ENCODE measurements at regions of chr11 and their contacts with region 1.

Region 1: GRCh38 chr11:355581-356458 is 13.5 kb upstream of the B4GALNT4 start:
- DNase-seq: peak; percentile 98
- H3K4me3 ChIP-seq: peak overlapping the region; percentile 32 to 66 (median 40)
- H3K27ac ChIP-seq: peak overlapping the region; percentile 88 to 99 (median 97)
- H3K4me1 ChIP-seq: peaks cover 7 to 51% (median 36%) of the 10 kb centered on the region in 6 donors
- H3K27me3 ChIP-seq: no peaks in the 10 kb centered on the region
- CTCF ChIP-seq: peak in 2 of 11 experiments; percentile 4 to 19
- POLR2A ChIP-seq: peak in 2 of 3 donors; percentile 65 to 79

Region 2: GRCh38 chr11:304915-305843 is 50.6 kb before region 1 on chr11:
- intact Hi-C with region 1: loop called (anchors 5 kb)
- DNase-seq: peak; percentile 84
- H3K4me3 ChIP-seq: no peak overlapping the region
- H3K27ac ChIP-seq: peak overlapping the region in 6 of 8 donors; percentile 44 to 97 (median 90)
- H3K4me1 ChIP-seq: peaks cover 16 to 77% (median 51%) of the 10 kb centered on the region in 6 donors
- H3K27me3 ChIP-seq: peaks cover 0 to 3% (median 0%) of the 10 kb centered on the region in 7 donors
- CTCF ChIP-seq: peak; percentile 66 to 90 (median 81)
- POLR2A ChIP-seq: no peak

Region 3: DNA sequence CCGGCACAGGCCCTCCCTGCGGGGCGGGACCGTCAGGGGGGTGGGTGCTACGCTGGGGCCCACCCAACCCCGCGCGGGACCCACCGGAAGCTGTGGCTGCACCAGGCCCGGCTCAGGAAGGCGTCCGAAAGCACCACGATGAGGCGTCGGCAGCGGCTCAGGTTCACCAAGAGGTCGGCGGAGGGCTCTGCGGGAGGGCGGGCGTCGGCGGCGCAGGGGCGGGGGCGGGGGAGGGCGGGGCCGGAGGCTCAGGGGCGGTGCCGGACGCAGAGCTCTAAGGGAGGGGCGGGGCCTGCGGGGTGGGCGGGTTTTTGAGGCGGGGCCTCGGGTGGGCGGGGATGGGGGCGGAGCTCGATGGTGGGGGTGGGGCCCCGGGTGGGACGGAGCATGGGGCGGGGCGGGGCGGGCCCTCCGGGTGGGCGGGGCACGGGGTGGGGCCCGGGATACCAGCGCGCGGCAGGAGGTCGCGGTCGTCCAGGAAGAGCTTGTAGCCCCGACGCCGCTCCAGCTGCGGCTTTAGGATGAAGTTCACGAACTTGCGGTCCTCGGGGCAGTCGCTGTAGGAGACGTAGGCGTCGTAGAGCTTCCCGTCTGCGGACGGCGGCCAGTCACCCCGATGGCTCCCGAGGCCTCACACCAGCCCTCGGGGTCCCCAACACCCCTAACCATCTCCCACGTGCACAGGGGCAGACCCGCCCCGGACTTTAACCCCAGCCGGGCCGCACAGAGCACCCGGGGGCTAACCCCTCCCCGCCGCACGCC is 51.3 kb after region 1 on chr11:
- intact Hi-C with region 1: no loop called
- DNase-seq: peak; percentile 94
- H3K4me3 ChIP-seq: peak overlapping the region; percentile 45 to 82 (median 52)
- H3K27ac ChIP-seq: peak overlapping the region; percentile 53 to 92 (median 84)
- H3K4me1 ChIP-seq: peaks cover 10 to 51% (median 34%) of the 10 kb centered on the region in 6 donors
- H3K27me3 ChIP-seq: peaks cover 0 to 11% (median 6%) of the 10 kb centered on the region in 7 donors
- CTCF ChIP-seq: no peak
- POLR2A ChIP-seq: no peak

Region 4: DNA sequence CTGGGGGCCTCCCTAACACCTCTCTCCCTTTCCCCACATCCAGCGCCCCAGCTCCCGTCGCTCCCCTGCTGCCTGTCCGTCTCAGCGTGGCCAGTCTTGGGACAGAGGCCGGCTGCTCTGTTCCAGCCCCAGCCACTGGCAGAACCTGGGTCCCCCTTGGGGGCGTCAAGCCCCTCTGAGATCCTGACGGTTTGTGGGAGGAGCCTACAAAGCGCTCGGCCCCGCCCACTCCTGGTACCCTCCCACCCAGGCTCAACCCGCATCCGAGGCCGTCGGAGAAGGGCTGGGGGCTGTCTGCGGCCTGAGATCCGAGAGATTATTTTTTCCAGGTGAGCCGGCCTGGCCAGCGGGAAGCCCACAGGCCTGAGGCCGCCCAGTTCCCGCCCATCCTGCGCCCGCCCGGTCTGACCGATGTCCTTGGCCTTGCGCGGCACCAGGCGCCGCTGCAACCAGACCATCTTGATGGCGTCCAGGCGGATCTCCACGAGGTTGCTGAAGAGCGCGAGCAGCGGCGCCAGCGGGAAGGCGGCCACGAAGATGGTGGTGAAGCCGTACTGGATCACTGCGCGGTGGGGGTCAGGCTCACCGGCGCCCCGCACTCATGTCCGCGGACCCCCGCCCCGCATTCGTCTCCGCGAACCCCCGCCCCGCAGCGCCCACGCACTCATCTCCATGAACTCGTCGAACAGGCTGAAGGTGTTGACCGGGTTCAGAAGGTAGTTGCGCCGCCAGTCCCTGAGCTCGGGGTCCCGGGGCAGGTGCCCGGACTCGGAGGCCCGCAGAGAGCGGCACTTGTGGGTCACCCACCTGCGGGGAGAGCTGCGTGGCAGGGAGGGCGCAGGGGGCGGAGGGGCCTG is 64.5 kb after region 1 on chr11:
- intact Hi-C with region 1: no loop called
- DNase-seq: peak; percentile 78
- H3K4me3 ChIP-seq: no peak overlapping the region
- H3K27ac ChIP-seq: no peak overlapping the region
- H3K4me1 ChIP-seq: peaks cover 10 to 30% (median 27%) of the 10 kb centered on the region in 6 donors
- H3K27me3 ChIP-seq: peaks cover 0 to 16% (median 0%) of the 10 kb centered on the region in 7 donors
- CTCF ChIP-seq: no peak
- POLR2A ChIP-seq: no peak

Measured in spleen (tissue), 13 donors.